Left colon (tissue), 2 donors: ENCODE measurements at regions of chr11 and their contacts with region 1.

Region 1: DNA sequence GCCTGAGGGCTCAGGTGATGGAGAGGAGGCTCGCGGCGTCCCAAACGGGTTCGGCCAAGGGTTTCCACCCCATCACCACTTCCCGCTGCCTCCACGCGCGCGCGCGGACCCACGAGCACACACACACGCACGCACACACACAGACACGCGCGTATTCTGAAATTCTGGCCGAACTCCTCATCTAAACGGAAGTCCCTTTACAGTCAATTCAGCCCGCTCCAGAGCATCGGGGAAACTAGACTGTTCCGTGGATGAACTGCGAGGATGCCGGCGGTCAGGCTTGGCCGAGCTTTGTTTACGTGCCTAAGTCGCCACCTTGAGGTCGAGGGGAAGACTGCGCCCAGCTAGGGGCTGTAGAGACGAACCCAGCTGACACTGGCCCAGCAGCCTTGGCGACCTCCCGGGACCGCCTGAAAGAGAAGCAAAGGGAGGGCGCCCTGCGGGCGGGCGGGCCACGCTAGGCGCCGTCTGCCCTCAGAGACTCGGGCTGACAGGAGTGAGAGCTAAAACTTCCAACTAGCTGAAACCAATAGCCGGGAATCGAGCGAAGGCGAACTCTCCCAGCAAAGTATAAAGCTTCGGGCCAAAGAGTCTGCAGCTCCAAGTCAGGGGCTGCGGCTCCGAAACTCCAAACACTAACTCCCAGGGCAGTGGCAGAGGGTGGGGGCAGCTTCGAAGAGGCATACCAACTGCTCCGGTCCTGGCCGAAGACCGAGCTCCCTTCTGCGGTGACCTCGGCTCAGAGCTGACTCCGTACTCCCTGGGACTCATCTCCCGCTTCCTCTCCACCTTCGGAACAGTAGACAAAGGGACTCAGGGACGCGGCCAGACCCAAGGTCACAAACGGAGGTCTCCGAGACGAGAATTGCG is 124.7 kb upstream of the C11orf58 start:
- DNase-seq: peak; percentile 77 to 88
- ATAC-seq: peak; percentile 99

Region 2: GRCh38 chr11:15327786-15328231 is 1285.9 kb before region 1 on chr11:
- intact Hi-C with region 1: loop called in 1 of 2 experiments (anchors 10 kb)
- DNase-seq: peak; percentile 30 to 62
- ATAC-seq: peak; percentile 86

Region 3: GRCh38 chr11:15649371-15650104 is 964.2 kb before region 1 on chr11:
- intact Hi-C with region 1: loop called in 1 of 2 experiments (anchors 10 kb)
- DNase-seq: no peak
- ATAC-seq: no peak

Region 4: GRCh38 chr11:16338393-16338792 is 275.4 kb before region 1 on chr11:
- intact Hi-C with region 1: no loop called
- DNase-seq: no peak
- ATAC-seq: no peak

Region 5: GRCh38 chr11:16561150-16561549 is 52.6 kb before region 1 on chr11:
- intact Hi-C with region 1: no loop called
- DNase-seq: no peak
- ATAC-seq: no peak